ENCODE measurements at regions of chr4 and their contacts with region 1.

Region 1: DNA sequence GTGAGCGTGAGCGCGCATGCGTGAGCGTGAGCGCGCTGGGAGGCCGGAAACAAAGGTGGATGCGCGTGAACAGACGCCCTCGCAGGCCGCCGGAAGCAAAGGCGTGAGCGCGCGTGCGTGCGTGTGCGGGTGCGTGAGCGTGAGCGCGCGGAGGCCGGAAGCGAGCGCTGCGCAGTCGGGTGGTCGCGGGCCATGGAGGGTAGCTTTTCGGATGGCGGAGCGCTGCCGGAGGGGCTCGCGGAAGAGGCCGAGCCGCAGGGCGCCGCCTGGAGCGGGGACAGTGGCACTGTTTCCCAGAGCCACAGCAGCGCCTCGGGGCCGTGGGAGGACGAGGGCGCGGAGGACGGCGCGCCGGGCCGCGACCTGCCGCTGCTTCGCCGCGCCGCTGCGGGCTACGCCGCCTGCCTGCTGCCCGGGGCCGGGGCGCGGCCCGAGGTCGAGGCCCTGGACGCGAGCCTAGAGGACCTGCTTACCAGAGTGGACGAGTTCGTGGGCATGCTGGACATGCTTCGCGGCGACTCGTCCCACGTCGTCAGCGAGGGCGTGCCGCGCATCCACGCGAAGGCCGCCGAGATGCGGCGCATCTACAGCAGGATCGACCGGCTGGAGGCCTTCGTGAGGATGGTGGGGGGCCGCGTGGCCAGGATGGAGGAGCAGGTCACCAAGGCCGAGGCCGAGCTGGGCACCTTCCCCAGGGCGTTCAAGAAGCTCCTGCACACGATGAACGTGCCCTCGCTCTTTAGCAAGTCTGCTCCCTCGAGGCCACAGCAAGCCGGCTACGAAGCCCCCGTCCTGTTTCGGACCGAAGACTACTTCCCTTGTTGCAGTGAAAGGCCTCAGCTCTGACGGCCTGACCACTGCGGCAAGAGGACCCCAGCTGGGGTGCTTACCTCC is at the start of gene BLOC1S4:
- DNase-seq: peak; percentile 80
- ATAC-seq: peak; percentile 79
- H3K4me3 ChIP-seq: peak within 1 kb of the TSS; percentile 83 to 93 (median 88)
- H3K27ac ChIP-seq: peak within 1 kb of the TSS; percentile 79
- H3K4me1 ChIP-seq: peaks cover 45% of the 10 kb centered on the region
- H3K27me3 ChIP-seq: no peaks in the 10 kb centered on the region
- CTCF ChIP-seq: no peak; the same call in 1 of the 2 replicates
- EP300 ChIP-seq: no peak
- POLR2A ChIP-seq: peak in 1 of 2 experiments; percentile 76; a peak in 2 of 4 replicates
- RAD21 ChIP-seq: peak; percentile 66
- total RNA-seq, gene BLOC1S4: 18.7 and 20.9 TPM in 2 replicates

Region 2: DNA sequence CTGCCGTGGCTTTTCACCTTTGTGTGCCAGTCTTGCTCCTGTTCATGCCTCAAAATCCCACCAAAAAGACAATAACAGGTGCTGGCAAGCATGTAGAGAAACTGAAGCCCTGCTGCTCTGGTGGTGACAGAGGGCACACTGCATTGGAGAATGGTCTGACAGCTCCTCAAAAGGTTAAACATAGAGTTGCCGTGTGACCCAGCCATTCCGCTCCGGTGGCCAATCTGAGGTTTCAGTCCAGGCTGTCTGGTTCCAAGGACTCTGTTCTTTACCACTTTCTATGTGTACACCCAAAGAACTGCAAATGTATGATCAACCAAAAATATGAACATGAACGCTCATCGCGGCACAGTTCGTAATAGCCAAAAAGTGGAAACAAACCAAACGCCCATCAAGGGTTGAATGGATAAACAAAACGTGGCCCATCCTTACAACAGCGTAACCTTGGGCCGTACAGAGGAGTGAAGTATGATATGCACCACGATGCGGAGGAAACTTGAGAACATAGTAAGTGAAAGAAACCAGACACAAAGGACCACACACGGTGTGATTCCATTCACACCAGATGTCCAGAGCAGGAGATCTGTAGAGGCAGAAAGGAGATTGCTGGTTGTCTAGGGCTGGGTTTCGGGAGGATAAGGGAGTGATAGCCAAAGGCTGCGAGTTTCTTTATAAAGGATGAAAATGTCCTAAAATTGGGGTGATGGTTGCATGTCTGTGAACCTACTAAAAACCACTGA is 480.2 kb before region 1 on chr4:
- CTCF ChIA-PET with region 1: no interaction called
- POLR2A ChIA-PET with region 1: no interaction called
- in situ Hi-C with region 1: no loop called
- intact Hi-C with region 1: no loop called
- DNase-seq: no peak
- ATAC-seq: no peak
- H3K4me3 ChIP-seq: no peak overlapping the region
- H3K27ac ChIP-seq: no peak overlapping the region
- H3K4me1 ChIP-seq: no peaks in the 10 kb centered on the region
- H3K27me3 ChIP-seq: peaks cover 6 to 35% of the 10 kb centered on the region in 2 experiments; a peak in 3 of 5 replicates
- CTCF ChIP-seq: no peak
- EP300 ChIP-seq: no peak
- POLR2A ChIP-seq: no peak
- RAD21 ChIP-seq: no peak

Region 3: GRCh38 chr4:6688879-6689505 is 27.3 kb before region 1 on chr4:
- CTCF ChIA-PET with region 1: no interaction called
- POLR2A ChIA-PET with region 1: interaction called, 15 read pairs
- in situ Hi-C with region 1: no loop called
- intact Hi-C with region 1: no loop called
- DNase-seq: peak; percentile 91
- ATAC-seq: peak; percentile 62
- H3K4me3 ChIP-seq: peak overlapping the region; percentile 49 to 74 (median 66); a peak in 5 of 6 replicates
- H3K27ac ChIP-seq: peak overlapping the region; percentile 94
- H3K4me1 ChIP-seq: peaks cover 75% of the 10 kb centered on the region
- H3K27me3 ChIP-seq: no peaks in the 10 kb centered on the region; a peak in 1 of 5 replicates
- CTCF ChIP-seq: peak; percentile 44
- EP300 ChIP-seq: peak in 1 of 2 experiments; percentile 53; a peak in 1 of 4 replicates
- POLR2A ChIP-seq: peak in 1 of 2 experiments; percentile 32; a peak in 2 of 4 replicates
- RAD21 ChIP-seq: no peak

Region 4: GRCh38 chr4:6703786-6704185 is 12.5 kb before region 1 on chr4:
- CTCF ChIA-PET with region 1: no interaction called
- POLR2A ChIA-PET with region 1: interaction called, 10 read pairs
- in situ Hi-C with region 1: no loop called
- intact Hi-C with region 1: no loop called
- DNase-seq: peak; percentile 43
- ATAC-seq: no peak
- H3K4me3 ChIP-seq: no peak overlapping the region
- H3K27ac ChIP-seq: peak overlapping the region; percentile 23
- H3K4me1 ChIP-seq: peaks cover 64% of the 10 kb centered on the region
- H3K27me3 ChIP-seq: no peaks in the 10 kb centered on the region; a peak in 1 of 5 replicates
- CTCF ChIP-seq: no peak
- EP300 ChIP-seq: no peak
- POLR2A ChIP-seq: no peak
- RAD21 ChIP-seq: no peak

Region 5: GRCh38 chr4:6768539-6768905 is 52.3 kb after region 1 on chr4:
- CTCF ChIA-PET with region 1: no interaction called
- POLR2A ChIA-PET with region 1: interaction called, 23 read pairs
- in situ Hi-C with region 1: no loop called
- intact Hi-C with region 1: loop called (anchors 5 kb)
- DNase-seq: no peak
- ATAC-seq: no peak; the same call in 1 of the 3 replicates
- H3K4me3 ChIP-seq: peak overlapping the region; percentile 5 to 62 (median 34); a peak in 4 of 6 replicates
- H3K27ac ChIP-seq: peak overlapping the region; percentile 18
- H3K4me1 ChIP-seq: peaks cover 82% of the 10 kb centered on the region
- H3K27me3 ChIP-seq: no peaks in the 10 kb centered on the region
- CTCF ChIP-seq: no peak
- EP300 ChIP-seq: no peak
- POLR2A ChIP-seq: no peak
- RAD21 ChIP-seq: no peak

Region 6: DNA sequence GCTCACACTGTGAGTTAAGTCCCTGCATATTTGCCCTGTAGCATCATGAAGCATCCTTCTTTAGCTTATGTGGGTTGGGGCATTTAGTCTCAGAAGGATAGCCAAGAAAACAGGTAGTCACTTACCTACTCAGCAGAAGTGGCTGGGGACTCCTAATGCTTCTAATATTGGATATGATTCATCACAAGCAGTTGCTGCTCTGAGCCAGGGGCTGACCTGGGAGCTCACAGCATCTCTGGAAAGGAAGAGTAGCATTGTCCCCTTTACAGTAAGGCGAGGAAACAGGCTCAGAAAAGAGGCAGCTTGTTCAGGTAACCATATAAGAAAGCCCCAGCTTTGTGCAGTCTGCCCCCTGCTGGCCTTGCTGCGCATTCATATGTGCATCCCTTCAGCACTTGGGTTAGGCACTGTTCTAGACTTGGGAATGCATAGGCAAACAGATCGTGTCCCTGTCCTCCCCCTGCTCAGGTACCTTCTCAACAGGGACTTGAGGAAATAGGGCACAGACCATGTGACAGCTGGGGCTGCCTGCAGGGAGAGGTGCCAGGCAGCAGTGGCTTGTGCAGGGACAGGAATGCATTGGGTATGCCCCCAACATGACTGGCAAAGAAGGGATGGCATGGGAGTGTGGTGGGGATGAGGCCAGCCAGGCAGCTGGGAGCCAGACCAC is 157.7 kb after region 1 on chr4:
- CTCF ChIA-PET with region 1: interaction called, 50 read pairs
- POLR2A ChIA-PET with region 1: interaction called, 3 read pairs
- in situ Hi-C with region 1: loop called (anchors 5 kb)
- intact Hi-C with region 1: loop called (anchors 1 kb)
- DNase-seq: peak; percentile 41
- ATAC-seq: peak; percentile 89
- H3K4me3 ChIP-seq: no peak overlapping the region
- H3K27ac ChIP-seq: no peak overlapping the region
- H3K4me1 ChIP-seq: no peaks in the 10 kb centered on the region
- H3K27me3 ChIP-seq: no peaks in the 10 kb centered on the region
- CTCF ChIP-seq: peak; percentile 89
- EP300 ChIP-seq: no peak
- POLR2A ChIP-seq: no peak
- RAD21 ChIP-seq: peak; percentile 83

Region 7: GRCh38 chr4:7089213-7089986 is 373.1 kb after region 1 on chr4:
- CTCF ChIA-PET with region 1: no interaction called
- POLR2A ChIA-PET with region 1: no interaction called
- in situ Hi-C with region 1: no loop called
- intact Hi-C with region 1: no loop called
- DNase-seq: no peak
- ATAC-seq: no peak
- H3K4me3 ChIP-seq: no peak overlapping the region
- H3K27ac ChIP-seq: no peak overlapping the region
- H3K4me1 ChIP-seq: peaks cover under 1% of the 10 kb centered on the region; the same call in 1 of the 2 replicates
- H3K27me3 ChIP-seq: peaks cover 1 to 16% of the 10 kb centered on the region in 2 experiments; a peak in 3 of 5 replicates
- CTCF ChIP-seq: no peak
- EP300 ChIP-seq: no peak
- POLR2A ChIP-seq: no peak
- RAD21 ChIP-seq: no peak